IMR-90 (cell line): ENCODE measurements at regions of chr11 and their contacts with region 1.

Region 1: DNA sequence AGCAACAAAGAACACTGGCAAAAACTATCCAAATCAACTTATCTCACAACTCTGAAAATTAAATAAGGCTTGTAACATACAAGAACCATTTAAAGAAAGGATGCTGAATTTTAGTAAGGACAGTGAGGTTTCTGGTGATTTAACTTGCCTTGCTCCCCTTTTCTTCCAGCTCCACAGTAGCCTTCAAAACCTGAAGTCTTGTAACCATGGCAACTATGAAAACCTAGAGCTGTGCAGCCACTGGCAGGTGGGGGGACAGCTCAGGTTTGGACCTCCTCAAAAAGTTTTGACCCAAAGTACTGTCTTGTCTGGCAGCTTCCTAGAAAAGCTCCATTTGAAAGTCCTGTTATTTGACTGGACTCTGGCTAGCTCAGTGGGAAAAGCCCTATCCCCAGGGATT is 60.0 kb downstream of the CKAP5 start:
- DNase-seq: no peak
- ATAC-seq: no peak
- H3K4me3 ChIP-seq: no peak overlapping the region
- H3K27ac ChIP-seq: no peak overlapping the region
- H3K4me1 ChIP-seq: no peaks in the 10 kb centered on the region
- H3K27me3 ChIP-seq: no peaks in the 10 kb centered on the region
- CTCF ChIP-seq: no peak
- POLR2A ChIP-seq: no peak
- RAD21 ChIP-seq: no peak

Region 2: DNA sequence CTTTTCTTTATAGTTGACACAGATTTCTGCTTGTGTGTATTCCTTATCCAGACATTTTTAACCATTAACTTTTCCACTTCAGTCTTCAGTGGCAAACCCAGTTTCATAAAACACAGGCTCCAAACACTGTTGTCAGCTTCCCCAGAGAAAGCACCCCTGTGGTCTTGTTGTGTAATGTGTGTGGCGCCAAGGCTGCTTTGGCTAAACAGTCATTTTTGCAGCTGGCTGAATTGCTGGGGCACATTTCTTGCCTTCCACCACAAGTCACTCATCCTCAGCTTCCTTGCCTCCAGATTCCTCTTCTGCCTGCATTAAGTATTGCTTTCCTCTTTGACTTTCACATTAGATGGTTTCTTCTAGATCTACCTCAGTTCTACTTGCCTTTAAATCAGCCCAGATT is 126.2 kb before region 1 on chr11:
- CTCF ChIA-PET with region 1: no interaction called
- POLR2A ChIA-PET with region 1: no interaction called
- dilution Hi-C with region 1: no loop called
- in situ Hi-C with region 1: no loop called
- intact Hi-C with region 1: no loop called
- DNase-seq: peak; percentile 84
- ATAC-seq: peak; percentile 58
- H3K4me3 ChIP-seq: no peak overlapping the region
- H3K27ac ChIP-seq: no peak overlapping the region
- H3K4me1 ChIP-seq: peaks cover 12% of the 10 kb centered on the region
- H3K27me3 ChIP-seq: no peaks in the 10 kb centered on the region
- CTCF ChIP-seq: no peak
- POLR2A ChIP-seq: no peak
- RAD21 ChIP-seq: no peak

Region 3: GRCh38 chr11:46755962-46756361 is 30.1 kb before region 1 on chr11:
- CTCF ChIA-PET with region 1: interaction called, 5 read pairs
- POLR2A ChIA-PET with region 1: no interaction called
- dilution Hi-C with region 1: no loop called
- in situ Hi-C with region 1: loop called (anchors 5 kb)
- intact Hi-C with region 1: no loop called
- DNase-seq: no peak
- ATAC-seq: no peak
- H3K4me3 ChIP-seq: no peak overlapping the region
- H3K27ac ChIP-seq: no peak overlapping the region
- H3K4me1 ChIP-seq: no peaks in the 10 kb centered on the region
- H3K27me3 ChIP-seq: no peaks in the 10 kb centered on the region
- CTCF ChIP-seq: no peak
- POLR2A ChIP-seq: no peak
- RAD21 ChIP-seq: no peak

Region 4: GRCh38 chr11:47161134-47161854 is 375.2 kb after region 1 on chr11:
- CTCF ChIA-PET with region 1: no interaction called
- POLR2A ChIA-PET with region 1: no interaction called
- dilution Hi-C with region 1: no loop called
- in situ Hi-C with region 1: no loop called
- intact Hi-C with region 1: no loop called
- DNase-seq: peak; percentile 69
- ATAC-seq: peak; percentile 83
- H3K4me3 ChIP-seq: no peak overlapping the region
- H3K27ac ChIP-seq: no peak overlapping the region
- H3K4me1 ChIP-seq: no peaks in the 10 kb centered on the region
- H3K27me3 ChIP-seq: no peaks in the 10 kb centered on the region
- CTCF ChIP-seq: peak; percentile 81
- POLR2A ChIP-seq: no peak; the same call in 1 of the 2 replicates
- RAD21 ChIP-seq: peak; percentile 86